Activated B cell treated with CpG ODN at 0.5 μM for 24 hours (primary cell): ENCODE measurements at regions of chr15 and their contacts with region 1.

Region 1: GRCh38 chr15:101723874-101724674 is at the start of gene TARS3:
- DNase-seq: peak; percentile 83
- ATAC-seq: peak; percentile 89
- H3K4me3 Mint-ChIP-seq: peak within 1 kb of the TSS; percentile 82
- H3K27ac Mint-ChIP-seq: peak within 1 kb of the TSS; percentile 85
- H3K4me1 Mint-ChIP-seq: peaks cover 15% of the 10 kb centered on the region
- H3K27me3 Mint-ChIP-seq: no peaks in the 10 kb centered on the region
- CTCF ChIP-seq: no peak
- total RNA-seq, gene TARS3: 12.0 and 13.0 TPM in 2 replicates

Region 2: GRCh38 chr15:101286471-101287114 is 437.5 kb before region 1 on chr15:
- CTCF ChIA-PET with region 1: no interaction called
- POLR2A ChIA-PET with region 1: no interaction called
- intact Hi-C with region 1: no loop called
- DNase-seq: no peak
- ATAC-seq: no peak
- H3K4me3 Mint-ChIP-seq: no peak overlapping the region
- H3K27ac Mint-ChIP-seq: no peak overlapping the region
- H3K4me1 Mint-ChIP-seq: peaks cover 21% of the 10 kb centered on the region
- H3K27me3 Mint-ChIP-seq: no peaks in the 10 kb centered on the region
- CTCF ChIP-seq: no peak

Region 3: DNA sequence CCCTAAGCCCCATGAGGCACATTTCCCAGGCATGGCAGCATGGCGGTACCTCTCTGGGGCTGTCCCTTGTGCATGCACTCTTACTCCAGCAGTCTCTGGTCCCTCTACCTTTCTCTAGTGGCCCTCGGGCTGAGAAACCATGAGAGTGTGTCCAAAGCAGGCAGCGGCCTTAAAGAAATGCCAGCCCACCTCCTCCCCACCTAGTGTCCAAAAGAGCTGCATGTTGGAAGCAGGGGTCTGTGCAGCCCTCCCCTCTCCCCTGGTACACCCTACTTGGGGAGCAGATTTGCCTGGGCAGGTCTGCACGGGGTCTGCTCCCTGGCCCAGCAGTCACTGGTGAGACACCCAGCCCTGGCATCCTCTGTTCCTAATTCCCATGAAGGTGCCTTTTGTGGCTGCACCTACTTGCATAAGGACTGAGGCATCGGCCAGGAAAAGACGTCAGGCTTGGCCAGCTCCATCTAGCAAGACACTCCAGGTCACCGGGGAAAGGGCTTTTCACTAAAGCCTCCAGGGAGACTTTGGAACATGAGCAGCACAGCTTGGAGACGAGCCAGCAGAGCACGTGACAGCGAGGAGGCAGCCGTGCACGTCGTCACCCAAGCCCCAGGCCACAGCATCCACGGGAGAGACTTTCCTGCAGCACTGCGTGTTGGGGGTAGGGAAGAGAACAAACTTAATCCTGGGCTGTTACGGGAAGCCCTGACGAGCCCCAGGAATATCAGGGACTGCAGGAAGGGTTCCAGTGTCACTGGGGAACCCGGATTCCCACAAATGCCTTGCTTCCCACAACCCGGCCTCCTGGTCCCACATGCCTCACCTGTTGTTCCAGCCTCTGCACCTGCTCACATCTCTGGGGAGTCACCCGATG is 110.7 kb before region 1 on chr15:
- CTCF ChIA-PET with region 1: no interaction called
- POLR2A ChIA-PET with region 1: no interaction called
- intact Hi-C with region 1: no loop called
- DNase-seq: no peak
- ATAC-seq: no peak
- H3K4me3 Mint-ChIP-seq: no peak overlapping the region
- H3K27ac Mint-ChIP-seq: no peak overlapping the region
- H3K4me1 Mint-ChIP-seq: no peaks in the 10 kb centered on the region
- H3K27me3 Mint-ChIP-seq: peaks cover 2% of the 10 kb centered on the region
- CTCF ChIP-seq: no peak

Region 4: DNA sequence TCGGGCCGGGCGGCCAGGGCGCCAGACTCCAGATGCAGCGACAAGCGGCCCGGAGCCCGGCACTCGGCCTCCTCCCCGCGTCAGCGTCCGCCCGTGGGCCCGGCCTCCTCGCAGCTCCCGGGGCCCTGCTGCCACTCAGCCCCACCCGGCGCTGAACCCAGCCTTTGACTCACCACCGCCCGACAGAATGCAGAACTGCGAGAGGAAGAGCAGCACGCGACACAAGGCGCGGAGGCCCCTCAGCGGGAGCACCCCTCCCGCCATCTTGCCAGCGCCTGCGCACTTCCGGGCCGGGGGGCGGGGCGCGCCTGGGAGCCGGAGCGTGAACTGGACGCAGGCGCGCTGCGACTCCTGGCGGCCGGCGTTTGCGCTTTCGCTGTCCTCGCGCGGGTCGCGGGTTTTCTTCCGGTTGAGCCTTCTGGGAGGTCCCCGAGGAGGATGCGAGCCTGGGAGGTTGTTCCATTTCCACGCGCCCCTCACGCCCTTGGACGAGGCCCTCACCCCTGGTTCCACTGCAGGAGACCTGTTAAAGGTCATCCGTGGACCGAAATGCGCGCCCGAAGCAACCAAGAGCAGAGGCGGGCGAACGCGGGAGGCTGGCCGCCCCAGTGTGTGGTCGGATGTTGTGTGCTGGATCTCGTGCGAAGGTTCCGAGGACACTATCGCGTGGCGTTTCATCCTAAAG is 71.8 kb before region 1 on chr15 and contains the start of gene TM2D3:
- CTCF ChIA-PET with region 1: no interaction called
- POLR2A ChIA-PET with region 1: interaction called, 7 read pairs
- intact Hi-C with region 1: loop called (anchors 1 kb)
- DNase-seq: peak; percentile 99
- ATAC-seq: peak; percentile 87
- H3K4me3 Mint-ChIP-seq: peak within 1 kb of the TSS; percentile 92
- H3K27ac Mint-ChIP-seq: peak within 1 kb of the TSS; percentile 95
- H3K4me1 Mint-ChIP-seq: peaks cover 46% of the 10 kb centered on the region
- H3K27me3 Mint-ChIP-seq: no peaks in the 10 kb centered on the region
- CTCF ChIP-seq: no peak
- total RNA-seq, gene TM2D3: 45.8 and 49.9 TPM in 2 replicates

Region 5: DNA sequence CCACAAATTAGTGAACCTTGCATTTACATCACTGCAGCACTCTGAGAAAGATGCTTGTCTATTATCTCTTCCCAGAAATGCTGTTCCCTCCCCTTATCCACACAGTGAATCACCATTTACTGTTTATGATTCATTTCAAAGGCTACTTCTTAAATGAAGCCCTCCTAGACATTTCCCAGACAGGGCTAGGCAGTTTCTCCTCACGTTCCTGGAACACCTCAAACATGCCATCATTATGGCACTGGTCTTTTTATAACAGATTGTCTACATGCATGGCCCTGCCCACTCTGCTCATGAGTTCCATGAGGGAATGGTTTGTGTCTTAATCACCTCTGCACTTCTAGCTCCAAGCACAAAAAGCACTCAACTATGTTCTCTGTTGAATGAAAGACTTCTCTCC is 39.7 kb before region 1 on chr15:
- CTCF ChIA-PET with region 1: no interaction called
- POLR2A ChIA-PET with region 1: no interaction called
- intact Hi-C with region 1: no loop called
- DNase-seq: no peak
- ATAC-seq: no peak
- H3K4me3 Mint-ChIP-seq: no peak overlapping the region
- H3K27ac Mint-ChIP-seq: no peak overlapping the region
- H3K4me1 Mint-ChIP-seq: no peaks in the 10 kb centered on the region
- H3K27me3 Mint-ChIP-seq: no peaks in the 10 kb centered on the region
- CTCF ChIP-seq: no peak